Activated T-helper 1 cell treated with anti-CD3 and anti-CD28 coated beads, Interleukin-12 subunit alpha, Interleukin-12 subunit beta, Interleukin-2, Interleukin-4 antibody, amounts not matched to agents 30 ng/mL and 10 ng/mL and 1 ng/mL, durations not matched to agents 14 hours and 24 hours and 36 hours (primary cell): ENCODE measurements at regions of chr9 and their contacts with region 1.

Region 1: GRCh38 chr9:105405514-105406131 is 42.2 kb upstream of the FSD1L start:
- DNase-seq: peak; percentile 61
- H3K4me3 Mint-ChIP-seq: peak overlapping the region; percentile 23
- H3K27ac Mint-ChIP-seq: peak overlapping the region; percentile 90
- H3K4me1 Mint-ChIP-seq: peaks cover 31% of the 10 kb centered on the region
- H3K27me3 Mint-ChIP-seq: peaks cover 66% of the 10 kb centered on the region

Region 2: GRCh38 chr9:105280691-105281090 is 124.9 kb before region 1 on chr9:
- intact Hi-C with region 1: no loop called
- DNase-seq: no peak
- H3K4me3 Mint-ChIP-seq: no peak overlapping the region
- H3K27ac Mint-ChIP-seq: no peak overlapping the region
- H3K4me1 Mint-ChIP-seq: no peaks in the 10 kb centered on the region
- H3K27me3 Mint-ChIP-seq: no peaks in the 10 kb centered on the region

Region 3: GRCh38 chr9:105385381-105385985 is 20.1 kb before region 1 on chr9:
- intact Hi-C with region 1: loop called (anchors 1 kb)
- DNase-seq: peak; percentile 25
- H3K4me3 Mint-ChIP-seq: peak overlapping the region; percentile 82
- H3K27ac Mint-ChIP-seq: peak overlapping the region; percentile 68
- H3K4me1 Mint-ChIP-seq: peaks cover 27% of the 10 kb centered on the region
- H3K27me3 Mint-ChIP-seq: peaks cover 6% of the 10 kb centered on the region

Region 4: GRCh38 chr9:105457560-105458294 is 52.1 kb after region 1 on chr9:
- intact Hi-C with region 1: no loop called
- DNase-seq: no peak
- H3K4me3 Mint-ChIP-seq: no peak overlapping the region
- H3K27ac Mint-ChIP-seq: no peak overlapping the region
- H3K4me1 Mint-ChIP-seq: no peaks in the 10 kb centered on the region
- H3K27me3 Mint-ChIP-seq: no peaks in the 10 kb centered on the region